HCT116 (cell line): ENCODE measurements at regions of chr5 and their contacts with region 1.

Region 1: GRCh38 chr5:151126199-151126645 is 31.4 kb downstream of the ANXA6 start:
- DNase-seq: peak; percentile 38
- ATAC-seq: peak; percentile 88
- H3K4me3 ChIP-seq: no peak overlapping the region
- H3K27ac ChIP-seq: no peak overlapping the region
- H3K4me1 ChIP-seq: peaks cover 0 to 18% of the 10 kb centered on the region in 2 experiments; a peak in 2 of 4 replicates
- H3K27me3 ChIP-seq: no peaks in the 10 kb centered on the region
- CTCF ChIP-seq: peak; percentile 72 to 90 (median 84)
- POLR2A ChIP-seq: no peak
- RAD21 ChIP-seq: peak; percentile 88

Region 2: GRCh38 chr5:151115274-151115905 is 10.8 kb before region 1 on chr5:
- CTCF ChIA-PET with region 1: interaction called, 19 read pairs
- POLR2A ChIA-PET with region 1: no interaction called
- RAD21 ChIA-PET with region 1: interaction called in 1 of 2 experiments, 3 read pairs
- intact Hi-C with region 1: no loop called
- DNase-seq: peak; percentile 32
- ATAC-seq: peak; percentile 93
- H3K4me3 ChIP-seq: no peak overlapping the region
- H3K27ac ChIP-seq: no peak overlapping the region
- H3K4me1 ChIP-seq: no peaks in the 10 kb centered on the region
- H3K27me3 ChIP-seq: no peaks in the 10 kb centered on the region
- CTCF ChIP-seq: peak; percentile 94 to 96 (median 95)
- POLR2A ChIP-seq: no peak
- RAD21 ChIP-seq: peak; percentile 97

Region 3: GRCh38 chr5:151157426-151158286 is 31.4 kb after region 1 on chr5 and contains the start of gene ANXA6:
- CTCF ChIA-PET with region 1: interaction called, 107 read pairs
- POLR2A ChIA-PET with region 1: no interaction called
- RAD21 ChIA-PET with region 1: interaction called, 3 to 6 read pairs
- intact Hi-C with region 1: no loop called
- DNase-seq: peak; percentile 45
- ATAC-seq: peak; percentile 96
- H3K4me3 ChIP-seq: peak within 1 kb of the TSS; percentile 71 to 74
- H3K27ac ChIP-seq: peak within 1 kb of the TSS; percentile 45
- H3K4me1 ChIP-seq: peaks cover 19 to 36% of the 10 kb centered on the region in 2 experiments
- H3K27me3 ChIP-seq: no peaks in the 10 kb centered on the region
- CTCF ChIP-seq: no peak
- POLR2A ChIP-seq: peak; percentile 71
- RAD21 ChIP-seq: no peak
- total RNA-seq, gene ANXA6: 71.9 TPM

Region 4: GRCh38 chr5:151164686-151165392 is 38.6 kb after region 1 on chr5:
- CTCF ChIA-PET with region 1: interaction called, 107 read pairs
- POLR2A ChIA-PET with region 1: interaction called, 7 read pairs
- RAD21 ChIA-PET with region 1: interaction called, 28 to 29 read pairs
- intact Hi-C with region 1: loop called (anchors 1 kb)
- DNase-seq: peak; percentile 77
- ATAC-seq: peak; percentile 99
- H3K4me3 ChIP-seq: no peak overlapping the region
- H3K27ac ChIP-seq: no peak overlapping the region
- H3K4me1 ChIP-seq: peaks cover 0 to 8% of the 10 kb centered on the region in 2 experiments; a peak in 2 of 4 replicates
- H3K27me3 ChIP-seq: no peaks in the 10 kb centered on the region
- CTCF ChIP-seq: peak; percentile 91 to 95 (median 91)
- POLR2A ChIP-seq: no peak
- RAD21 ChIP-seq: peak; percentile 98

Region 5: GRCh38 chr5:151239237-151239861 is 113.1 kb after region 1 on chr5:
- CTCF ChIA-PET with region 1: interaction called, 29 read pairs
- POLR2A ChIA-PET with region 1: no interaction called
- RAD21 ChIA-PET with region 1: interaction called, 3 to 5 read pairs
- intact Hi-C with region 1: loop called (anchors 1 kb)
- DNase-seq: peak; percentile 34
- ATAC-seq: peak; percentile 95
- H3K4me3 ChIP-seq: no peak overlapping the region
- H3K27ac ChIP-seq: no peak overlapping the region
- H3K4me1 ChIP-seq: peaks cover 8 to 9% of the 10 kb centered on the region in 2 experiments; a peak in 2 of 4 replicates
- H3K27me3 ChIP-seq: no peaks in the 10 kb centered on the region
- CTCF ChIP-seq: peak; percentile 83 to 93 (median 90)
- POLR2A ChIP-seq: no peak
- RAD21 ChIP-seq: peak; percentile 91

Region 6: DNA sequence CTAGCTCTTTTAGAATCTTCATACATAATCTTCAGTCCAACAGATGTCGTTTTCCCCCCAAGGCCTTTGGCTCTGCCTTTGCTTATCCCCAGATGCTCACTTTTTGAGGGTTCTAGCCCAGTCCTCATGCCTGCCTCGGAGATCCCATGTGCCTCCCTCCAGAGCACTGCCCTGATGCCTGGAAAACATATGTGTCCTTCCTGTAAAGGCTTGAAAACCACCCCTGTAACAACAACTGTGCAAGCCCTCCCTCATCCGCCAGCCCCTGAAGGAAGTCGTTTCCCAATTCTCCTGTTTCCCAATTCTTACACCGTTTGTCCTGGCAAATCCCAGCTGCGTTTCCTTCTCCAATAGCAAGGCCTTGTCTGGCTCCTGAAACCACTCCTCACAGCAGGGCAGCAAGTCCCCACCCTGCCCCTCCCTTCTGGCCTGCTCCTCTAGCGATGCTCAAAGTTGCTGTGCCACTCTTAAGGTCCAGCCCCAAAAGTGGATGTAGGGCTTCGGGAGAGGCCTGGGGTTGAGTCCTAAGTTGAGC is 373.3 kb after region 1 on chr5:
- CTCF ChIA-PET with region 1: no interaction called
- POLR2A ChIA-PET with region 1: no interaction called
- RAD21 ChIA-PET with region 1: no interaction called
- intact Hi-C with region 1: loop called (anchors 5 kb)
- DNase-seq: no peak
- ATAC-seq: no peak
- H3K4me3 ChIP-seq: no peak overlapping the region
- H3K27ac ChIP-seq: no peak overlapping the region
- H3K4me1 ChIP-seq: peaks cover 0 to 2% of the 10 kb centered on the region in 2 experiments; a peak in 1 of 4 replicates
- H3K27me3 ChIP-seq: no peaks in the 10 kb centered on the region
- CTCF ChIP-seq: no peak
- POLR2A ChIP-seq: no peak
- RAD21 ChIP-seq: no peak

Region 7: DNA sequence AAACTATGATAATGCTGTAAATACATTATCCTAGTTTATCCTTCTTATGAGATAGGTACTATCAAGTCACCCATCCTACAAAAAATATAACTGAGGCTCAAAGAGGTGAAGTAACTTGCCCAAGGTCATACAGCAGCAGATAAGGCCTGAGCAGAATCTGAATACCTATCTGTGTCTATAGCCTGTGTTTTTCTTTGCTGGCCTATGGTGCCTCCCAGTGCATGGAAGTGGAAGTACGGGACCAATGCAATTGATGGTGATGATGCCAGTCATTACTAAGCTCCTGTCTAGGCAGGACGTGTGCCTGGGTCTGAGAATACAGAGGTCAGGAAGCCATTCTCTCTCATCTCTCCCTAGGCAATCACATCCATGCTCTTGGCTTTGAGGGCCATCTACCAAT is 397.1 kb after region 1 on chr5:
- CTCF ChIA-PET with region 1: interaction called, 14 read pairs
- POLR2A ChIA-PET with region 1: no interaction called
- RAD21 ChIA-PET with region 1: no interaction called
- intact Hi-C with region 1: no loop called
- DNase-seq: peak; percentile 39
- ATAC-seq: peak; percentile 98
- H3K4me3 ChIP-seq: no peak overlapping the region
- H3K27ac ChIP-seq: no peak overlapping the region
- H3K4me1 ChIP-seq: no peaks in the 10 kb centered on the region
- H3K27me3 ChIP-seq: no peaks in the 10 kb centered on the region
- CTCF ChIP-seq: peak; percentile 78 to 81 (median 81)
- POLR2A ChIP-seq: no peak
- RAD21 ChIP-seq: peak; percentile 89